ENCODE measurements at regions of chr9 and their contacts with region 1.

Region 1: GRCh38 chr9:121322037-121322775 is 47.8 kb downstream of the STOM start:
- DNase-seq: no peak
- H3K4me3 Mint-ChIP-seq: no peak overlapping the region
- H3K27ac Mint-ChIP-seq: no peak overlapping the region
- H3K4me1 Mint-ChIP-seq: peaks cover 26% of the 10 kb centered on the region
- H3K27me3 Mint-ChIP-seq: no peaks in the 10 kb centered on the region

Region 2: DNA sequence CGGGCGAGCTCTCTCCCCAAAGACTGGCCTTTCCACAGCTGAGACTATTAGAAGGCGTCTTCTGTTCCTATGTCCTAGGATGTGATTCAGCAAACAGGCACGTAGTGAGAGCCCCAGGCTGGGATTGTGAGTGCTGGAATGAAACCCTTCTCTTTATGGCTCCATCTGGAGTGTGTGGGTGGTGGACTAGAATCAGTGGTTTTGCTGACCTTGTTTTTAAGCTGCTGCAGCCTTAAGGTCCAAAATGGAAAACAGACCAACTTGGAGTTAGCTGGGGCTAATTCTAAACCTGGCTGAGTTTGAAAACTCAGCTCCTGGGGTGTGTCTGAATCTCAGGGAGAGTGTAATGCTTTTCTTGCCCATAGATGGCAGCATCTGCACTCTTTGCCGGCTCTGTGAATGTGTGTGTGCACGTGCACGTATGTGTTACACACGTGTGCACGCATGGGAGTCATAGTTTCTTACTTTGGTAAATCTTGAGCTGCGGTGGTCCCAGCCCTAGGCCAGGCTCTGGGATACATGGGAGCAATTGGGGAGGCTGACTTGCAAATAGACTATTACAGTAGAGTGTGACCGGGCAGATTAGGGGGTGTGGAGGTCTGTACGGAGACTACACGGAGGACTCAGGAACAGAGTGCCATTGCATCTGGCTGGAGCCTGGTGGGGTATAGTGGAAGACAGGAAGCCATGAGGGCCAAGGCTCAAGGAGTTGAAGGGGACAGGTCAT is 43.5 kb before region 1 on chr9:
- intact Hi-C with region 1: loop called (anchors 2 kb)
- DNase-seq: peak; percentile 17
- H3K4me3 Mint-ChIP-seq: no peak overlapping the region
- H3K27ac Mint-ChIP-seq: no peak overlapping the region
- H3K4me1 Mint-ChIP-seq: peaks cover 6% of the 10 kb centered on the region
- H3K27me3 Mint-ChIP-seq: peaks cover 3% of the 10 kb centered on the region

Region 3: DNA sequence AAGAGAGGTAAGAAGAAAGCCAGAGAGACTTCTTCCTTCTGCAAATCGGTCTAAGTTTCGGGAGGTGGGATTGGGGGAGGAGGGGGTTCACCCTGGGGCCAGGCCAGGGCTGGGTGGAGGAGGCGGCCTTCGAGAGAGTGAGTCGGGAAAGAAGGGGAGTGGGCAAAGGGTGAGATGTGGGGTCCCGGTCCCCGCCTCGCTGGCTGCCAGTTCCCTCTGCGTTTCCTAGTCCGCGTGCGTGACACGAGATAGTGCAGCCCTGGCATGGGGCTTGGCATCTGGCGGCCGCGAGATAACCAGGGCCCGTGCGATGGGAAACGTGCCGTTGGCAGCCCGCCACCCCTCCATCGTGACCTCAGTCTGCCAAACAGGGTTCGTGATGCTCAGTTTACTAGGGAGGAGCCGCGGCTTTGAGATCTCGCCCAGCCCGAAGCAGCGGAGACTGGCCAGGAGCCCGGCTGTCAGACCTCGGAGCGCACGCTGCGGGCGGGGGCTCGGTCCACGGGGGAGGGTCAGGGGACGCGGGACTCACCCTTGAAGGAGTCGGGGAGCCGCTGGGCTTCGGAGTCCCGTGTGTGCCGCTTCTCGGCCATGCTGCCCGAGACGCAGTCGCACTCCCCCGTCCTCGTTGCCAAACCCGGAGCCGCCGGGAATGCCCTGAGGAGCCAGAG is 47.5 kb after region 1 on chr9 and contains the start of gene STOM:
- intact Hi-C with region 1: loop called (anchors 1 kb)
- DNase-seq: no peak
- H3K4me3 Mint-ChIP-seq: peak within 1 kb of the TSS; percentile 87
- H3K27ac Mint-ChIP-seq: peak within 1 kb of the TSS; percentile 96
- H3K4me1 Mint-ChIP-seq: peaks cover 77% of the 10 kb centered on the region
- H3K27me3 Mint-ChIP-seq: no peaks in the 10 kb centered on the region
- total RNA-seq, gene STOM: 51.1 and 51.7 TPM in 2 replicates

Region 4: GRCh38 chr9:121399883-121400607 is 77.8 kb after region 1 on chr9:
- intact Hi-C with region 1: loop called (anchors 1 kb)
- DNase-seq: no peak
- H3K4me3 Mint-ChIP-seq: no peak overlapping the region
- H3K27ac Mint-ChIP-seq: no peak overlapping the region
- H3K4me1 Mint-ChIP-seq: no peaks in the 10 kb centered on the region
- H3K27me3 Mint-ChIP-seq: peaks cover 22% of the 10 kb centered on the region

Region 5: DNA sequence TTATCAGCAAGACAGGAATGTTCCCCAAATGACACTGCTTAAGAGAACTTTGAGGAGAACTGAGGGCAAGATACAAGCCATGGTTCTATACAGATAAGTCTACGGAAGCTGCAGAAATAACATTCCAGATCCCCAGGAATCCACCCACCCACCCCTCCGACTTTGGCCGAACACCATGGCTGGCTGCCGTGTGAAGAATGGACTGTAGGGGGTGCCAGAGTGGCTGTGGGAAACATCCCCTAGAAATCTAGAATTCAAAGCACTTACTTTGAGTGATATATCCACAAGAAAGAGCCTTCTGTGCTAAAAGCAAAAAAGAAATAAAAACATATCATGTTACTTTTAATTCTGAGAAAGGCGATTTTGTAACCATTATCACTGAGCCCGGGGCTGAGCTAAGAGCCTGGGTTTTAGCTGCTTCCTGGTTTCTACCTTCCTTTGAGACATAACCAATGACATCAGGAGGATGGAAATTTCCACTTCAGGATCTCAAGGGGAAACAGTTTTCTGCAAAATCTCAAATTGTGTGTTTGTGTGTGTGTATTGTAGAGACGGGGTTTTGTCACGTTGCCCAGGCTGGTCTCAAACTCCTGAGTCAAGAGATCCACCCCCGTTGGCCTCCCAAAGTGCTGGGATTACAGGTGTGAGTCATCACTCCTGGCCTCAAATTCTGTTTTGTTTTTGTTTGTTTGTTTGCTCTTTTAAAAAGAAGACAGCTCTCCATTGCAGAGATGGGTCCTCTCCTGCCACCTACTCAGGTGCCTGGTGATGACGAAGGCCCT is 141.0 kb after region 1 on chr9:
- intact Hi-C with region 1: no loop called
- DNase-seq: no peak
- H3K4me3 Mint-ChIP-seq: no peak overlapping the region
- H3K27ac Mint-ChIP-seq: no peak overlapping the region
- H3K4me1 Mint-ChIP-seq: peaks cover 21% of the 10 kb centered on the region
- H3K27me3 Mint-ChIP-seq: peaks cover 19% of the 10 kb centered on the region